ENCODE measurements at regions of chr1 and their contacts with region 1.

Region 1: DNA sequence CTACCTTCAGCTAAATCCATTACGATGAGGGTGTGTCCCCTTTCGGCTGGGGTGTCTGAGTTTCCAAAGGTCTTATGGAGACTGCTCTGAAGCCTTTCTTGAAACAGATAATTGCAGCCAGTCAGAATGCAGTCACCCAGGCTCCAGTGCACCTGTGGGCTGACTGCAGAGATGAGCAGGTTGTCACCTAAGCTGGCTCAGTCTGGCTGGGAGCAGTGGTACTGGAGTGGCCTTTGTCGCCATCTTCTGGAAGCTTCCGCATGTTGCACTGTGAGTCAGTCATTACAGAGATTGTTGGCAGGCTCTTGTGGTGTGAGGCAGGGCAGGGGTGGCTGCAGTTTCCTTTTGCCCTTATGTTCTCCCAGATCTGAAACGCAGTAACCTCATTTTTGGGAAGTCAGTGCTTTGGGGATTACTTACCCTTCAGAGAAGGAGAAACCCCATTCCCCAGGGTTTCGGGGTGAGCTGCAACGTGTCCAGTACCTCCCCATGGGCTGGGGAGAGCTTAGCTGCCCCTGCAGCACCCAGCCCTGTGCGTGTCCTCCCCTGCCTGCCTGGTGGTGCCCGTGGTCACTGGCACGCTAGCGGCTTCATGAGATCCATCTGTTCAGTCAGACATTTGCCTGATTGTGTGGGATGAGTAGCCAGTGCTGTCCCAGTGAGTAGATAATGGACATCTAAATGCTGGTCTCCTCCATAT is 48.0 kb downstream of the SMYD2 start:
- DNase-seq: peak; percentile 90
- H3K4me3 Mint-ChIP-seq: no peak overlapping the region
- H3K27ac Mint-ChIP-seq: no peak overlapping the region
- H3K4me1 Mint-ChIP-seq: no peaks in the 10 kb centered on the region
- H3K27me3 Mint-ChIP-seq: no peaks in the 10 kb centered on the region

Region 2: DNA sequence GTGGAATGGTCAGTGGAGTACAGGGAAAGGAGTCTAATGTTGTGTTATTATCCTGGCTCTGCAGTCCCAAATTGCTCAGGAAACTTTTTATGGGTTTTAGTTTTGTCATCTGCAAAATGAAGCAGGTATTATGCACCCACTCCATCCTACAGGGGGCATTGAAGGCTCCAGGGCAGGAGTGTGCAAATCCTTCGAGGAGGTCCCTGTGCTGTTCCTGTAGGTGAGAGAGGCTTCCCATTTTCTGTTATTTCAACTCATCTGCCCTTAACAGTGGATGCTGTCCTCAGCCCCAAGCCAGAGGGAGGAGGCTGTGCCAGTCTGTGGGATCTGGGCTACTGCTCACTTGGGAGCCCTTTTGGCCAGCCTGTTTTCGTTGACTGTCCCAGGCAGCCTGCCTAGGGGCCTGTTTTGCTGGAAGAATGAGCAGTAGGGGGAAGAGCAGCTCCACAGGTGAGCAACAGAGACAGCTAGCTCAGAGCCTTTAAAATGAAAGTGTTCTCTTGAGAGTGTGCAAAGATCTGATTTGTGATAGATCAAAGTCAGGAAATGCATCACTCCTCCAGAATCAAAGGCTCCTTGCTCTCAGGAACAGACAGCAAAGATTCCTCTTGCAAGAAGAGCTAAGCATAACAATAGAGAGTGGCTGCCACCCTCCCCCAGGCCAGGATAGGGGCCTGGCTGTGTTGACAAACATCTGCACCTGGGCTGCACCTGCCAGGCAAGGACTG is 658.8 kb before region 1 on chr1:
- CTCF ChIA-PET with region 1: no interaction called
- intact Hi-C with region 1: loop called (anchors 1 kb)
- DNase-seq: peak; percentile 49
- H3K4me3 Mint-ChIP-seq: no peak overlapping the region
- H3K27ac Mint-ChIP-seq: no peak overlapping the region
- H3K4me1 Mint-ChIP-seq: peaks cover 14% of the 10 kb centered on the region
- H3K27me3 Mint-ChIP-seq: no peaks in the 10 kb centered on the region

Region 3: GRCh38 chr1:214261206-214262123 is 67.5 kb before region 1 on chr1:
- CTCF ChIA-PET with region 1: interaction called, 369 read pairs
- intact Hi-C with region 1: loop called (anchors 1 kb)
- DNase-seq: peak; percentile 91
- H3K4me3 Mint-ChIP-seq: no peak overlapping the region
- H3K27ac Mint-ChIP-seq: no peak overlapping the region
- H3K4me1 Mint-ChIP-seq: peaks cover 11% of the 10 kb centered on the region
- H3K27me3 Mint-ChIP-seq: peaks cover 46% of the 10 kb centered on the region

Region 4: GRCh38 chr1:214316593-214316992 is 12.3 kb before region 1 on chr1:
- CTCF ChIA-PET with region 1: interaction called, 18 read pairs
- intact Hi-C with region 1: no loop called
- DNase-seq: no peak
- H3K4me3 Mint-ChIP-seq: no peak overlapping the region
- H3K27ac Mint-ChIP-seq: no peak overlapping the region
- H3K4me1 Mint-ChIP-seq: peaks cover 2% of the 10 kb centered on the region
- H3K27me3 Mint-ChIP-seq: no peaks in the 10 kb centered on the region

Region 5: GRCh38 chr1:214446772-214447556 is 118.0 kb after region 1 on chr1:
- CTCF ChIA-PET with region 1: interaction called, 4 read pairs
- intact Hi-C with region 1: loop called (anchors 1 kb)
- DNase-seq: no peak
- H3K4me3 Mint-ChIP-seq: no peak overlapping the region
- H3K27ac Mint-ChIP-seq: peak overlapping the region; percentile 16
- H3K4me1 Mint-ChIP-seq: peaks cover 32% of the 10 kb centered on the region
- H3K27me3 Mint-ChIP-seq: peaks cover 2% of the 10 kb centered on the region

Region 6: DNA sequence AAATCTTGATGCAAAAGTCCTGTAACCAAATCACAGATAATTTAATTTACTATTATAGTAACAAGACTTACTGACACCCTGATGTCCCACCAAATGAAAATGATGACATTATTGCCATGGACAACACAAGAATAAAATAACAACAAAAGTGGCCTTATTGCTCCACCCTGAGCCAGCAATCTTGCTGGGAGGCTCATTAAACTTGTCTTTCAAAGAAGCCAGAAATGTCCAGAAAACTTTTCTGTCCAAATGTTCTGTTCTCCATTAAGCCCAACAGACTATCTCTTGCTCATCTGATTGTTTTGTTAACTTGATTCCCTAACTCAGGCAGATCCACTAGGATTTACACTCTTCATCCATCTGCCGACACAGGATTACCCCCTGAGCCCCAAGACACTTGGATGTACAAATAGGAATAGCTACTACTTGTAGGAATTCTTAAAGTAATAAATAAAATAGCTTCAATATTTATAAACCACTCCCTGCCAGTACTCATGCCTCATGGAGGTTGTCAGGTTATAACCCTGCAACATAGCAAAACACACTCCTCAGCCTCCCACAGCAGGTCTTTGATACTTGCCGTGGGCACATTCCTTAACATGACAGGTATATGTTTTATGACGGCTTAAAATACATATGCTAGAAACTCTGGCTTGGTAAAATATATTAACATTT is 137.6 kb after region 1 on chr1:
- CTCF ChIA-PET with region 1: no interaction called
- intact Hi-C with region 1: no loop called
- DNase-seq: no peak
- H3K4me3 Mint-ChIP-seq: no peak overlapping the region
- H3K27ac Mint-ChIP-seq: no peak overlapping the region
- H3K4me1 Mint-ChIP-seq: no peaks in the 10 kb centered on the region
- H3K27me3 Mint-ChIP-seq: peaks cover 5% of the 10 kb centered on the region

Region 7: DNA sequence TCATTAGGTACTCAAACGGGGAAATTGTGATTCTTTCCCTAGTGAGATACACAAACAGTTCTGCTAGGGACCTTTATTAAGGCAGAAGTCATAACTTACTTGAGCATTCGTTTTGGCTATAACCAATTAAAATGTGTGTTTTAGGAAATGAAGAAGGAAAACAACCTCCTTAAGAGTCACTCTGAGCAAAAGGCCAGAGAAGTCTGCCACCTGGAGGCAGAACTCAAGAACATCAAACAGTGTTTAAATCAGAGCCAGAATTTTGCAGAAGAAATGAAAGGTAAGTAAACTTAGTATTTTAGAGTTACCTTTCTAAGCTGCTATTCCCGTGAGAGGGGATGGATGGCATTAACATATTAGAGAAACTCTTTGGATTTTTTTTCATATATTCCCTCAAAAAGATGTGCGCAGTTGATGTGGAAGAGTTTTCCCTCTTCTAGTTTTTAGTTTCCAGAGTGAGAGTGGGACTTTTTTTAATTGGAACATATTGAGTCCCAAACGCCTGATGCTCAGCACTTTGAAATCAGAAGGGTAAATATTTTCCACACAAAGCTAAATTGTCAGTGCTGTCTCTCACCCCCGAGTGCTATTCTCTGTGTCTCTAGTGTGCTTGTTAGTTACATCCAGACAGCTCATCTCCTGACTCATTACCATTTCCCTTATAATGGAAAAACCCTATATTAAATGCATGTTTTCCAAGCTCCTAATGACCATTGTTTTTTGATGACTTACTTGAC is 309.0 kb after region 1 on chr1:
- CTCF ChIA-PET with region 1: no interaction called
- intact Hi-C with region 1: loop called (anchors 5 kb)
- DNase-seq: peak; percentile 32
- H3K4me3 Mint-ChIP-seq: no peak overlapping the region
- H3K27ac Mint-ChIP-seq: peak overlapping the region; percentile 37
- H3K4me1 Mint-ChIP-seq: peaks cover 38% of the 10 kb centered on the region
- H3K27me3 Mint-ChIP-seq: no peaks in the 10 kb centered on the region

Region 8: DNA sequence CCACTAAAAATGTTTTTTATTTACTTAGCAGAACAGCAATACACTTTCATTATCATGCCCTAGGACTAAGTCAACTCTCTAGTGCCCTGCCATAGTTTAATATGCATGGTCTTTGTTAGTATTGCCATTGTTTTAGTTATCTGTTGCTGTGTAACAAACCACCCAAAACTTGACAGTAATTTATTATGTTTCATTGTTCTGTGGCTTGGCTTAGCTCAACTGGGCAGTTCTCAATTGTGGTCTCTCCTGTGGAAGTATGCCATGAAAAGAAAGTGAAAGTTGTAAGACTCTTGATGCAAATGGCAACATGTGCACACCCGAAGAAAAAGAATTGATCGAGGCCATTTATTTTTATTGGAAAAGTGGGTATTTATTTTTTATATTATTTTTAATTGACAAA is 1031.8 kb after region 1 on chr1:
- CTCF ChIA-PET with region 1: no interaction called
- intact Hi-C with region 1: no loop called
- DNase-seq: no peak
- H3K4me3 Mint-ChIP-seq: no peak overlapping the region
- H3K27ac Mint-ChIP-seq: no peak overlapping the region
- H3K4me1 Mint-ChIP-seq: no peaks in the 10 kb centered on the region
- H3K27me3 Mint-ChIP-seq: no peaks in the 10 kb centered on the region

Measured in activated naive CD4-positive, alpha-beta T cell treated with anti-CD3 and anti-CD28 coated beads for 36 hours (primary cell).